ENCODE measurements at regions of chr6 and their contacts with region 1.

Region 1: DNA sequence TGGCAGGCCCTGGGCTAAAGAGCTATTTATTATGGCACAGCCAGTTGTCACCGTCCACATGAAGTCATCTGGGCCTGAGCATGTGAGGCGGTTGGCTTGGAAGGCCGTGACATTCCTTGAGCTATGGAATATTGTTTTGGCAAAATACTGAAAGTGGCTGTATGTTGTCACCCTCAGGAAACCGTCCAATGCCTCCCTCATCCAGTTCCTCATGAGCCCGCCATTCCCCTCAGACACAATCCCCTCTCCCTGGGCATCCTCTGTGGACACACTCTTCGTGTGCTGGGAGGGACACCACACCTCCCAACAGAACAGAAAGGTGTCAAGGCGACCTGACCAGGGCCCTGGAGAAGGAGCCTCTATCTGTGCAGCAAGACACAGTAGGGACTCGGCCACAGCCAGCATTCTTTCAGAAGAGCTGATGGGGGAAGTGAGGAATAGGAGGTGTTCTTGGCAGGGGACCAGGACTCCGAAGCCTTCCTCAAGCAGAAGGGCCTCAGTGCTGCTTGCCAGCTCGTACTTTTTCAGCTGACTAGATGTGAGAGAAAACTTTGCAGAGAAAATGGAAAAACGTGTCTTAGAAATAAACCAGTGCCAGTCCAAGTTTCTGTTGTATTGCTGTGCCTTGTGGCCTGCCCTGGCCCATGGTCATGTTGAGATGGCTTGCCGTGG is 120.5 kb downstream of the SOD2 start:
- DNase-seq: no peak
- H3K4me3 ChIP-seq: no peak overlapping the region
- H3K4me3 Mint-ChIP-seq: no peak overlapping the region
- H3K27ac Mint-ChIP-seq: no peak overlapping the region
- H3K4me1 ChIP-seq: no peaks in the 10 kb centered on the region
- H3K4me1 Mint-ChIP-seq: no peaks in the 10 kb centered on the region
- H3K27me3 ChIP-seq: peaks cover 1% of the 10 kb centered on the region; the same call in 1 of the 2 replicates
- H3K27me3 Mint-ChIP-seq: peaks cover 5% of the 10 kb centered on the region
- CTCF ChIP-seq: no peak

Region 2: GRCh38 chr6:159642481-159642880 is 69.9 kb after region 1 on chr6:
- CTCF ChIA-PET with region 1: no interaction called
- POLR2A ChIA-PET with region 1: no interaction called
- intact Hi-C with region 1: no loop called
- DNase-seq: no peak
- H3K4me3 ChIP-seq: no peak overlapping the region
- H3K4me3 Mint-ChIP-seq: no peak overlapping the region
- H3K27ac Mint-ChIP-seq: no peak overlapping the region
- H3K4me1 ChIP-seq: no peaks in the 10 kb centered on the region
- H3K4me1 Mint-ChIP-seq: no peaks in the 10 kb centered on the region
- H3K27me3 ChIP-seq: no peaks in the 10 kb centered on the region
- H3K27me3 Mint-ChIP-seq: no peaks in the 10 kb centered on the region
- CTCF ChIP-seq: no peak

Region 3: GRCh38 chr6:159842035-159842434 is 269.5 kb after region 1 on chr6:
- CTCF ChIA-PET with region 1: no interaction called
- POLR2A ChIA-PET with region 1: no interaction called
- intact Hi-C with region 1: loop called (anchors 5 kb)
- DNase-seq: peak in 1 of 2 experiments; percentile 42
- H3K4me3 ChIP-seq: no peak overlapping the region
- H3K4me3 Mint-ChIP-seq: no peak overlapping the region
- H3K27ac Mint-ChIP-seq: no peak overlapping the region
- H3K4me1 ChIP-seq: no peaks in the 10 kb centered on the region
- H3K4me1 Mint-ChIP-seq: peaks cover 12% of the 10 kb centered on the region
- H3K27me3 ChIP-seq: no peaks in the 10 kb centered on the region
- H3K27me3 Mint-ChIP-seq: no peaks in the 10 kb centered on the region
- CTCF ChIP-seq: peak; percentile 53 to 57

Measured in Caco-2 (cell line).